Heart left ventricle (tissue), 16 donors: ENCODE measurements at regions of chr9 and their contacts with region 1.

Region 1: DNA sequence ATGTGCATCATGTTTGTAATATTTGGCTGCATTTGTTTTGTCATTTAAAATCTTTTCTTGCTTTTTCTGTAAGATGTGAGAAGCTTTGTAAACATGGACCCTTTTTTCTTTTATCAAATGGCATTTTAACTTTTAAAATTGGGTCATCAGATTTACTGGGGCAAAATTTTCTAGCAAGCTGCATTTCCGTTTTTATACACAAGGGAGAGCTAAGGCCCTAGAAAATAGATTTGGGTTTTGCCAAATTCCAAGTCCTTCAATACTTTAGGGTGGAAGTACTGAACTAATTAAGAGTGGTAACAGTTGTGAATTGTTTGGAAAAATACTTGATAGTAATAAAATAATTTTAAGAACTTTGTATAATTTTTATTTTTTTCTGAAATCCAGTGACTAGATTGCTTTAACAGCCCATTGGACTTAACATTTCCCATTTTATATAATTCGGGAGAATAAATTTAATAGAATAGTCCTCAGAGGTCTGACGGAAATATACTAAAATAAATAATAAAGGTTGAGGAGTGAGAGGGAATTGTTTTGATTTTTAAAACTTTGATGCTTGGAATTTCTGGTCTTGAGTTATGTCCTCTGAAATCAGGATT is 117.4 kb downstream of the SMARCA2 start:
- DNase-seq: no peak
- ATAC-seq: peak in 1 of 4 donors; percentile 51
- H3K4me3 ChIP-seq: no peak overlapping the region
- H3K27ac ChIP-seq: no peak overlapping the region
- H3K4me1 ChIP-seq: peaks cover 0 to 64% (median 34%) of the 10 kb centered on the region in 12 donors
- H3K27me3 ChIP-seq: no peaks in the 10 kb centered on the region
- CTCF ChIP-seq: peak; percentile 50 to 85 (median 78)
- POLR2A ChIP-seq: no peak

Region 2: DNA sequence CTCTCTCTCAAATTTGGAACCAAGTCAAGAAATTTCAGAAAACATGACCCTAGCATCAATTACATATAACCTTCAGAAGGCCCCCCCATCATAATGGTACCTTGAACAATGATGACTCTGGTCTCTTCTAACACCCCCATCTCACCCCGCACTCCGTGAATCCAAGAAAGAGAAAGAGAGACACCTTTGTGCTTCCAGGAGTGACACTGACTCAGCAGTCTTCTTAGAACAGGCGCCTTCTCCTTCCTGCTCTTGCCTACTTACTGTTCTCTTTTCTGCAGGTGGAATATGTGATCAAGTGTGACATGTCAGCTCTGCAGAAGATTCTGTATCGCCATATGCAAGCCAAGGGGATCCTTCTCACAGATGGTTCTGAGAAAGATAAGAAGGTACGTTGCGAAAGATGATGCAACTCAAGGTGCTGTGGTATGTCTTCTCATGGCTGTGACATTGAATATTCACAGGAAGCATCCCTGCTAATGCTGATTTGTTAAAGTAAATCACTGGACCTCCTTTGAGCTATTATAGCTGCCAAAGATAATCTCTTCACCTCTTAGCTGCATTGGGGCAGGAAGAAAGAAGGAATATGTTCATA is 36.1 kb before region 1 on chr9:
- intact Hi-C with region 1: no loop called
- DNase-seq: no peak
- ATAC-seq: no peak
- H3K4me3 ChIP-seq: no peak overlapping the region
- H3K27ac ChIP-seq: no peak overlapping the region
- H3K4me1 ChIP-seq: peaks cover 0 to 8% (median 0%) of the 10 kb centered on the region in 12 donors
- H3K27me3 ChIP-seq: no peaks in the 10 kb centered on the region
- CTCF ChIP-seq: no peak
- POLR2A ChIP-seq: no peak

Region 3: DNA sequence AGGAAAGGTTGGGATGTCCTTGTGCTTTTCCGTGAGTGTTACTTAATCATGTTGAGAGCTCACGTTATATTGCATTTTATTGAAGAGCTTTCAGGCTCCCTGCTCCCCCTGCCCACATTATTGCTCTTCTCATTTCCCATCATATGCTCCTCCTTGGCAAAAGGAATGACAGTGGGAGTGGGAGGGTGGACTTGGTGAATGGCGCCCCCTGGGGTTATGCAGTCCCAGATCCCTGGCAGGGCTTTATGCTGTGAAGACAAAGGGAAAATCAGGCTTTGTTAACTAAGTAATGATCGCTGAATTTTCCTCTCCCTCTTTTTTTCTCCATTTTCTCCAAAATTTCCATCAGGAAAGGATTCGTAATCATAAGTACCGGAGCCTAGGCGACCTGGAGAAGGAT is 49.2 kb after region 1 on chr9:
- intact Hi-C with region 1: loop called in 7 of 10 experiments (anchors 2 to 10 kb)
- DNase-seq: peak in 1 of 5 donors; percentile 26
- ATAC-seq: peak in 2 of 4 donors; percentile 49 to 52
- H3K4me3 ChIP-seq: no peak overlapping the region
- H3K27ac ChIP-seq: no peak overlapping the region
- H3K4me1 ChIP-seq: peaks cover 0 to 10% (median 0%) of the 10 kb centered on the region in 12 donors
- H3K27me3 ChIP-seq: no peaks in the 10 kb centered on the region
- CTCF ChIP-seq: peak; percentile 17 to 56 (median 40)
- POLR2A ChIP-seq: no peak

Region 4: DNA sequence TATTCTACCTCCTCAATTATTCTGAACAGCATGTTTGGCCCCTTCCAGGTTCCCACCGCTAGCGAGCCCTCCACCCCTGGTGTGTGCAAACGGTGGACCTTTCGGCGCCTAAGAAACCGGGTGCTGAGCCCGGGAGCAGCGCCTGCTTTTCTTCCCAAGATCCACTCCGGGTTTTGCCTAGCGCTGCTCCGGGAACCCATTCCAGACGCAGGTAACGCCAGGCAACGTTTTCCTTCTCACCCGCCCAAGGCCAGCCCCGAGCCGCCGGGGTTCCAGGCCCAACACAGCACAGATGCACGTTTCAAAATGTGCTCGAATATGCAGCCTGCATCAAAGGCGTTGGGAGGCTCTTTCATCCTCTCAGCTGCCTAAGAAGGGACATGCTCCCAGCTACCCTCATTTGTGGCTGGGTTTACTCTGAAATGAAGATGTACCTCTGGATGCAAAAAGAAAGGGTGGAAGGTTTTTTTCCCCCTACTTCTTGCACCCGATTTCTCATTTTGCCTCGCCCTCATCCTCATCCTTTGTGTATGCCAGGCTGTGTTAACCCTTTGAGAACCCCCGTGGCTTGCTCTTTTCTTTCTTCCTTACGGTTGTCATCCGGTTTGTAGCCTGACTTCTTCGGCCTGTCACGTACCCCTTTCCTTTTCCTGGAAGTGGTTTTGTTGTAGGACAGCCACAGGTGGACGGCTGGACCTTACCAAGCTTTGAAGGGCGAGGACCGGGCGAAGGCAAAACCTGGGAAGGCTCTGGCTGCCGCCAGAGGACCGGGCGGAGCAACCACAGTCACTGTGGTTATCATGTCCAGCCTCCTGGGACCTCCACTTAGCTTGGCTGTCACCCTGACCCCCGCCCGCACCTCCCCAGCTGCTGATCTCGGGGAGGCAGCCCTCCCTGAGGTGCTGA is 109.5 kb after region 1 on chr9:
- intact Hi-C with region 1: loop called in 4 of 10 experiments (anchors 5 to 10 kb)
- DNase-seq: peak; percentile 82 to 87 (median 84)
- ATAC-seq: peak; percentile 88 to 96 (median 96)
- H3K4me3 ChIP-seq: peak overlapping the region; percentile 37 to 67 (median 57)
- H3K27ac ChIP-seq: peak overlapping the region in 11 of 12 donors; percentile 42 to 77 (median 65)
- H3K4me1 ChIP-seq: peaks cover 0 to 20% (median 6%) of the 10 kb centered on the region in 12 donors
- H3K27me3 ChIP-seq: no peaks in the 10 kb centered on the region
- CTCF ChIP-seq: peak in 1 of 12 donors; percentile 7
- POLR2A ChIP-seq: peak in 1 of 2 donors; percentile 41

Region 5: GRCh38 chr9:2453703-2454102 is 321.1 kb after region 1 on chr9:
- intact Hi-C with region 1: no loop called
- DNase-seq: no peak
- ATAC-seq: no peak
- H3K4me3 ChIP-seq: no peak overlapping the region
- H3K27ac ChIP-seq: no peak overlapping the region
- H3K4me1 ChIP-seq: no peaks in the 10 kb centered on the region
- H3K27me3 ChIP-seq: no peaks in the 10 kb centered on the region
- CTCF ChIP-seq: no peak
- POLR2A ChIP-seq: no peak

Region 6: DNA sequence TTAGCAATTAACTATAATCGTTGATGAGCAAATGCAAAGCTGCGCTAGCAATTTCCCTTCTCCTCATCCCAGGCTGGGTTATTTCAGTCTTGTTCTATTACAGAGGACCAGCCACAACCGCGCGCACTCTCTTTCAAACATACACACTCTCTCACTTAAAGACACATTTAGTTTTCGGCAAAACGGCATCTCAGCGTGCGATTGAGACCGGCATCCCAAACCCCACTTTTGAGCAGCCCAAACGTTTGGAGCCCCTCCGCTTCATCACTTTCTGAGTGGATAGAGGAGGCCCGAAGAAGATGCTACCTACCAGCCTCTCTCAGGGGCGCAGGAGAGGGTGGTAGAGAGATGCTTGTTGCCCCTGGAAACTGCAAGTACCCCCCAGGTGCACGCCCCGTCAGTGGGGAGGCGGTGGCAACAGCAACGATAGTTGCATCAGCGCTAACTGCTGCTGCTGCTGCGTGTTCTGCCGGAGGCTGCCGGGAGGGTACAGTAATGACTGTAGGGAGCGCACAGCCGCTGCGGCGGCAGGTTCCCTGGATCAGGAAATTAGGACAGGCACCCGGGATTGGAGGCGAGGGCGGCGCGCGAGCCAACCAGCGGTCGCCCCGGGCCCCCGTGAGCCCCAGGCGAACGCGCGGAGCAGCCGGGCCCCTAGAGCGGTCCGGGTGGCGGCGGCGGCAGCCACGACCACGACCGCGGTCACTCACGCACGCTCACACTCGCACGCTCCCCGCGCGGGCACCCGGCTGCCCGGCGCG is 488.5 kb after region 1 on chr9:
- intact Hi-C with region 1: loop called in 2 of 10 experiments (anchors 10 kb)
- DNase-seq: peak; percentile 76 to 90 (median 89)
- ATAC-seq: peak; percentile 74 to 82 (median 82)
- H3K4me3 ChIP-seq: peak overlapping the region; percentile 70 to 94 (median 86)
- H3K27ac ChIP-seq: peak overlapping the region; percentile 55 to 98 (median 94)
- H3K4me1 ChIP-seq: peaks cover 0 to 38% (median 23%) of the 10 kb centered on the region in 12 donors
- H3K27me3 ChIP-seq: peaks cover 0 to 44% (median 0%) of the 10 kb centered on the region in 9 donors
- CTCF ChIP-seq: peak in 6 of 12 donors; percentile 12 to 40 (median 21)
- POLR2A ChIP-seq: peak in 1 of 2 donors; percentile 64

Region 7: DNA sequence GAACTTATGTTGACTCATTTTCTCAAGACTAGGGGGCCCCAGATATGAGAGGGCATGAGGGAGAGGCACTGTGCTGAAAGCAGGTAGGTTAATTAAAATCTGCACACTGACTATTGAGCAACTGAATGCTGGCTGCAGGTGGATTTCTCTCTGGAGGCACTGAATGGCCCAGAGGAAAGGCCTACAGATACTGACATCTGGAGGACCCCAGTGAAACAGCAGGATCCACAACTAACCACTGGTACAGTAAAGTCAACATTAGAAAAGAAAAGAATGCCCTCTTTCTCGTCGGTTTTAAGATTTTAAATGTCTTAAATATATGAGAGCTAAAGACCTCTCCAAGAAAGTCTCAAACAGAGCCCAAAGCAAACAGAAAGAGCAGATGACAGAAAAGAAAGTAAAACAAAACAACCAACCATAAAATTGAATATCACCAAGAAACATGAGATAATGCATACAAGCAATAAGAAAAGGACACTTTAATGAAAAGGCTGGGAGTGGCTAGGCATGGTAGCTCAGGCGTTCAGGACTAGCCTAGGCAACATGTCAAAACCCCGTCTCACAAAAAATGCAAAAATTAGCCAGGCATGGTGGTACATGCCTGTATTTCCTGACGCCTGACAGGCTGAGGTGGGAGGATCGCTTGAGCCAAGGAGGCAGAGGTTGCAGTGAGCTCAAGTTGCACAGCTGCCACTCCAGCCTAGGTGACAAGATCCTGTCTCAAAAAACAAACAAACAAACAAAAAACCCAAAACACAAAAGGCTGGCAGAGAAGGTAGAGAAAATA is 668.0 kb after region 1 on chr9:
- intact Hi-C with region 1: loop called in 1 of 10 experiments (anchors 2 kb)
- DNase-seq: no peak
- ATAC-seq: peak in 3 of 4 donors; percentile 70 to 78 (median 74)
- H3K4me3 ChIP-seq: no peak overlapping the region
- H3K27ac ChIP-seq: no peak overlapping the region
- H3K4me1 ChIP-seq: peaks cover 0 to 27% (median 0%) of the 10 kb centered on the region in 12 donors
- H3K27me3 ChIP-seq: no peaks in the 10 kb centered on the region
- CTCF ChIP-seq: peak in 11 of 12 donors; percentile 23 to 56 (median 52)
- POLR2A ChIP-seq: no peak

Region 8: DNA sequence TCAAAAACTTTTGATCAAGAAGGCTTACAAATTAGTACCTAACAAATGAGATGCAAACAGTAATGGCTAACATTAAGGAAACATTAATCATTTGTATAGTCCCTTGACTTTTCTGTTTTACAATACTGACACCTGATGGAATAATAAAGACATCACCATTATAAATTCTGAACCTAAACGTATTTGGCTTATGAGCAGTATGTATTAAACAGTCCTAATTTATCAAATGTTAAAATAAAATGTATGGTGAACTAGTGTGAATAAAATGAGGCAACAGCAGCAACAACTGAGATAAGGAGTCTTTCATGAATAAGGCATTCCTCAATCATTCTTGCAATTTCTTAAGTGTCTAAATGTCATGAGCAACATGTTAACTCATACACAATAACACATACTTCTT is 705.3 kb after region 1 on chr9:
- intact Hi-C with region 1: loop called in 8 of 10 experiments (anchors 5 kb)
- DNase-seq: no peak
- ATAC-seq: peak in 3 of 4 donors; percentile 33 to 58 (median 55)
- H3K4me3 ChIP-seq: peak overlapping the region in 9 of 12 donors; percentile 7 to 52 (median 34)
- H3K27ac ChIP-seq: peak overlapping the region in 9 of 12 donors; percentile 0 to 73 (median 37)
- H3K4me1 ChIP-seq: peaks cover 3 to 56% (median 42%) of the 10 kb centered on the region in 12 donors
- H3K27me3 ChIP-seq: no peaks in the 10 kb centered on the region
- CTCF ChIP-seq: peak in 11 of 12 donors; percentile 22 to 64 (median 44)
- POLR2A ChIP-seq: no peak